ENCODE measurements at regions of chr10 and their contacts with region 1.

Region 1: DNA sequence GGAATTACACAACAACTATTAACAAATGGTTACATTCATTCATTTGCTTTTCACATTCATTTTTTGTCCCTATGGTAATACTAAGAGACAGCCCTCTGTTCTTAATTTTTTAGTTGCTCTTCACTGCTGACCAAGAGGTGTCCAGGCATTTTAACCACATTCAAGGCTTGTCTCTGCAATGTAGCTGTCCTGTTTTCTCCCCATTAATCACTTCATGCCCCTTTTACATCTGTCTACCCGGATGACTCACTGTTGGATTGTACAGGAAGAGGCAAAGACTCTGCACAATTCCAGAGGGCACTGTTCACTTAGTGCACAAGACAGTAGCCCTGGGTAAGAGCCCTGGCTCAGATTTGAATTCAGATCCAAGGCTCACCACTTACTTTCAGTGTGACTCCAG is 168.5 kb downstream of the NOC3L start:
- DNase-seq: no peak
- H3K4me3 ChIP-seq: no peak overlapping the region
- H3K27ac ChIP-seq: no peak overlapping the region
- H3K27me3 ChIP-seq: no peaks in the 10 kb centered on the region
- CTCF ChIP-seq: no peak

Region 2: GRCh38 chr10:93977442-93977841 is 216.8 kb before region 1 on chr10:
- CTCF ChIA-PET with region 1: no interaction called
- POLR2A ChIA-PET with region 1: no interaction called
- DNase-seq: no peak
- H3K4me3 ChIP-seq: no peak overlapping the region
- H3K27ac ChIP-seq: no peak overlapping the region
- H3K27me3 ChIP-seq: peaks cover 9% of the 10 kb centered on the region
- CTCF ChIP-seq: no peak

Region 3: GRCh38 chr10:94183666-94184264 is 10.5 kb before region 1 on chr10:
- CTCF ChIA-PET with region 1: no interaction called
- POLR2A ChIA-PET with region 1: interaction called, 17 read pairs
- DNase-seq: peak; percentile 99
- H3K4me3 ChIP-seq: no peak overlapping the region
- H3K27ac ChIP-seq: peak overlapping the region; percentile 93
- H3K27me3 ChIP-seq: no peaks in the 10 kb centered on the region
- CTCF ChIP-seq: no peak

Region 4: GRCh38 chr10:94358480-94358879 is 164.2 kb after region 1 on chr10:
- CTCF ChIA-PET with region 1: no interaction called
- POLR2A ChIA-PET with region 1: no interaction called
- DNase-seq: peak; percentile 85
- H3K4me3 ChIP-seq: peak overlapping the region; percentile 41
- H3K27ac ChIP-seq: peak overlapping the region; percentile 77
- H3K27me3 ChIP-seq: no peaks in the 10 kb centered on the region
- CTCF ChIP-seq: no peak